Natural killer cell (primary cell): ENCODE measurements at regions of chr2 and their contacts with region 1.

Region 1: GRCh38 chr2:197239434-197239833 is 71.1 kb downstream of the ANKRD44 start:
- DNase-seq: peak in 1 of 2 donors; percentile 60
- ATAC-seq: peak; percentile 46 to 73 (median 54)
- H3K4me3 ChIP-seq: peak overlapping the region; percentile 16
- H3K4me3 Mint-ChIP-seq: peak overlapping the region; percentile 84
- H3K27ac ChIP-seq: peak overlapping the region; percentile 90
- H3K27ac Mint-ChIP-seq: peak overlapping the region; percentile 89 to 93
- H3K4me1 ChIP-seq: peaks cover 53% of the 10 kb centered on the region
- H3K4me1 Mint-ChIP-seq: peaks cover 80 to 83% of the 10 kb centered on the region in 2 donors
- H3K27me3 ChIP-seq: no peaks in the 10 kb centered on the region
- H3K27me3 Mint-ChIP-seq: no peaks in the 10 kb centered on the region
- CTCF ChIP-seq: no peak

Region 2: DNA sequence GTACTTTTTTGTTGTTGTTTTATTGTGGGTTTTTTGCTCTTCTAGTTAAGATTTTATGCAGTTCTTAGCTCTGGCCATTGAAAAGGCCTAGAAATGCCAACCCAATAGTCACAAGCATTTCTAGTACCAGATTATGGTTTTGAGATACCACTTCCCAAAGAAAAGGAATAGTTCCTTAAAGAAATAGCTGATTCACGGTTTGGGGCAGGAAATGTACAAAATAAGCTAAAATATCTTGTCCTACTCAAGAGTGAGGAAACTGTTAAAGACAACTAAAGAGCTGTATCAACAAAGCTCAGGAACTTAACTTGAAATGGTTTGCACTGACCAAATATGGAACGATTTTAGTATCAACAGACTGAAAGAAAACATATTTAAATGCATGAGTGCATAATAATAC is 348.3 kb before region 1 on chr2:
- intact Hi-C with region 1: no loop called
- DNase-seq: no peak
- ATAC-seq: no peak
- H3K4me3 ChIP-seq: no peak overlapping the region
- H3K4me3 Mint-ChIP-seq: no peak overlapping the region
- H3K27ac ChIP-seq: no peak overlapping the region
- H3K27ac Mint-ChIP-seq: no peak overlapping the region
- H3K4me1 ChIP-seq: no peaks in the 10 kb centered on the region
- H3K4me1 Mint-ChIP-seq: no peaks in the 10 kb centered on the region
- H3K27me3 ChIP-seq: no peaks in the 10 kb centered on the region
- H3K27me3 Mint-ChIP-seq: no peaks in the 10 kb centered on the region
- CTCF ChIP-seq: no peak

Region 3: GRCh38 chr2:197191177-197191939 is 48.1 kb before region 1 on chr2:
- intact Hi-C with region 1: loop called (anchors 2 kb)
- DNase-seq: peak in 1 of 2 donors; percentile 86
- ATAC-seq: peak; percentile 56 to 71 (median 59)
- H3K4me3 ChIP-seq: no peak overlapping the region
- H3K4me3 Mint-ChIP-seq: peak overlapping the region; percentile 57
- H3K27ac ChIP-seq: peak overlapping the region; percentile 62
- H3K27ac Mint-ChIP-seq: peak overlapping the region; percentile 85 to 91
- H3K4me1 ChIP-seq: peaks cover 14% of the 10 kb centered on the region
- H3K4me1 Mint-ChIP-seq: peaks cover 79 to 83% of the 10 kb centered on the region in 2 donors
- H3K27me3 ChIP-seq: no peaks in the 10 kb centered on the region
- H3K27me3 Mint-ChIP-seq: no peaks in the 10 kb centered on the region
- CTCF ChIP-seq: peak; percentile 89

Region 4: GRCh38 chr2:197198890-197199289 is 40.5 kb before region 1 on chr2:
- intact Hi-C with region 1: loop called (anchors 2 kb)
- DNase-seq: peak; percentile 75 to 97
- ATAC-seq: peak; percentile 80 to 93 (median 93)
- H3K4me3 ChIP-seq: peak overlapping the region; percentile 48
- H3K4me3 Mint-ChIP-seq: peak overlapping the region; percentile 95
- H3K27ac ChIP-seq: peak overlapping the region; percentile 87
- H3K27ac Mint-ChIP-seq: peak overlapping the region; percentile 91 to 98
- H3K4me1 ChIP-seq: peaks cover 55% of the 10 kb centered on the region
- H3K4me1 Mint-ChIP-seq: peaks cover 93 to 94% of the 10 kb centered on the region in 2 donors
- H3K27me3 ChIP-seq: no peaks in the 10 kb centered on the region
- H3K27me3 Mint-ChIP-seq: no peaks in the 10 kb centered on the region
- CTCF ChIP-seq: no peak

Region 5: GRCh38 chr2:197205585-197206215 is 33.7 kb before region 1 on chr2:
- intact Hi-C with region 1: loop called (anchors 2 kb)
- DNase-seq: peak; percentile 57 to 90
- ATAC-seq: peak; percentile 84 to 93 (median 91)
- H3K4me3 ChIP-seq: no peak overlapping the region
- H3K4me3 Mint-ChIP-seq: peak overlapping the region; percentile 78
- H3K27ac ChIP-seq: peak overlapping the region; percentile 91
- H3K27ac Mint-ChIP-seq: peak overlapping the region; percentile 91 to 96
- H3K4me1 ChIP-seq: peaks cover 73% of the 10 kb centered on the region
- H3K4me1 Mint-ChIP-seq: peaks cover 91 to 93% of the 10 kb centered on the region in 2 donors
- H3K27me3 ChIP-seq: no peaks in the 10 kb centered on the region
- H3K27me3 Mint-ChIP-seq: no peaks in the 10 kb centered on the region
- CTCF ChIP-seq: no peak

Region 6: GRCh38 chr2:197255543-197255942 is 16.1 kb after region 1 on chr2:
- intact Hi-C with region 1: loop called (anchors 1 kb)
- DNase-seq: peak; percentile 82 to 90
- ATAC-seq: peak; percentile 87 to 96 (median 94)
- H3K4me3 ChIP-seq: peak overlapping the region; percentile 23
- H3K4me3 Mint-ChIP-seq: peak overlapping the region; percentile 85
- H3K27ac ChIP-seq: peak overlapping the region; percentile 93
- H3K27ac Mint-ChIP-seq: peak overlapping the region; percentile 96 to 99
- H3K4me1 ChIP-seq: peaks cover 49% of the 10 kb centered on the region
- H3K4me1 Mint-ChIP-seq: peaks cover 72 to 73% of the 10 kb centered on the region in 2 donors
- H3K27me3 ChIP-seq: no peaks in the 10 kb centered on the region
- H3K27me3 Mint-ChIP-seq: no peaks in the 10 kb centered on the region
- CTCF ChIP-seq: no peak